Dendritic cell treated with granulocyte-macrophage colony-stimulating factor and Interleukin-4, amounts not matched to agents 40 ng/mL and 50 ng/mL, for 4 days (primary cell): ENCODE measurements at regions of chr1 and their contacts with region 1.

Region 1: GRCh38 chr1:47710329-47711071 is 272.7 kb downstream of the FOXD2 start:
- H3K4me3 Mint-ChIP-seq: no peak overlapping the region
- H3K27ac Mint-ChIP-seq: no peak overlapping the region
- H3K4me1 Mint-ChIP-seq: peaks cover 26% of the 10 kb centered on the region
- H3K27me3 Mint-ChIP-seq: peaks cover 88% of the 10 kb centered on the region

Region 2: GRCh38 chr1:47179017-47179987 is 531.2 kb before region 1 on chr1:
- intact Hi-C with region 1: loop called (anchors 10 kb)
- H3K4me3 Mint-ChIP-seq: peak overlapping the region; percentile 79
- H3K27ac Mint-ChIP-seq: peak overlapping the region; percentile 57
- H3K4me1 Mint-ChIP-seq: peaks cover 18% of the 10 kb centered on the region
- H3K27me3 Mint-ChIP-seq: peaks cover 42% of the 10 kb centered on the region

Region 3: GRCh38 chr1:47432071-47433036 is 278.1 kb before region 1 on chr1:
- intact Hi-C with region 1: loop called (anchors 1 kb)
- H3K4me3 Mint-ChIP-seq: peak overlapping the region; percentile 64
- H3K27ac Mint-ChIP-seq: peak overlapping the region; percentile 87
- H3K4me1 Mint-ChIP-seq: peaks cover 63% of the 10 kb centered on the region
- H3K27me3 Mint-ChIP-seq: peaks cover 51% of the 10 kb centered on the region

Region 4: GRCh38 chr1:47449822-47450552 is 260.5 kb before region 1 on chr1:
- intact Hi-C with region 1: loop called (anchors 5 kb)
- H3K4me3 Mint-ChIP-seq: no peak overlapping the region
- H3K27ac Mint-ChIP-seq: no peak overlapping the region
- H3K4me1 Mint-ChIP-seq: peaks cover 4% of the 10 kb centered on the region
- H3K27me3 Mint-ChIP-seq: peaks cover 59% of the 10 kb centered on the region

Region 5: GRCh38 chr1:47618830-47619229 is 91.7 kb before region 1 on chr1:
- intact Hi-C with region 1: no loop called
- H3K4me3 Mint-ChIP-seq: no peak overlapping the region
- H3K27ac Mint-ChIP-seq: no peak overlapping the region
- H3K4me1 Mint-ChIP-seq: no peaks in the 10 kb centered on the region
- H3K27me3 Mint-ChIP-seq: peaks cover 2% of the 10 kb centered on the region

Region 6: GRCh38 chr1:47637111-47637685 is 73.3 kb before region 1 on chr1:
- intact Hi-C with region 1: no loop called
- H3K4me3 Mint-ChIP-seq: no peak overlapping the region
- H3K27ac Mint-ChIP-seq: no peak overlapping the region
- H3K4me1 Mint-ChIP-seq: no peaks in the 10 kb centered on the region
- H3K27me3 Mint-ChIP-seq: peaks cover 17% of the 10 kb centered on the region

Region 7: GRCh38 chr1:47771751-47772180 is 61.3 kb after region 1 on chr1:
- intact Hi-C with region 1: no loop called
- H3K4me3 Mint-ChIP-seq: no peak overlapping the region
- H3K27ac Mint-ChIP-seq: no peak overlapping the region
- H3K4me1 Mint-ChIP-seq: no peaks in the 10 kb centered on the region
- H3K27me3 Mint-ChIP-seq: peaks cover 2% of the 10 kb centered on the region

Region 8: DNA sequence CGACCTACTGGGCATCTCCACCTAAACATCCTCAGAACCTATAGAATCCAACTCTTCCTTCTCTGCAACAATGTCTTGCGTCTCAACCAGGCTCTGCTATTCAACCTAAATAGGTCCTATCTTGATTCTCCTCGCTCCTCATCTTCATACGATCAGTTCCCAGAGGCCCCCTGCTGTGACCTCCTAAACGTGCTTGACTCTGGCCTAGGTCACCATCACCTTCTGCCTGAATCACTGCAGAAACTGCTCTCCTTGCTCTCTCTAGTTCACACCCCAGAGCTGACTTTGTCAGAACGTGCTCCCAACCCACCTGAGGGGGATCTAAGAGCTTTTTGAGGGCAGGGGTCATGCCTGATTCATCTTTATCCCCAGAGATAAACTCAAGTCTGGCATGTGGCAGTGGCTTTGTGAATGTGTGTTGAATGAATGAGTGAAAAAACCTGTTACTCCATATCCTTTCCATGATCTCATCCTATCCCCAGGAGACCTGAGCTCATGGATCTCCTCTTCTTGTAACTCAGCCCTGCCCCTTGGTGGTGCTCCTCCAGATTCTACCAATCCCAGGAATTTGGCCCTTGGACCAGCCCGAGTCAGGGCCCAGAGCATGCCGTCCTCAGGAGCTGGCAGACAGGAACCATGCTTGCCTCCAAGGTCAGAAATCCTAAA is 71.8 kb after region 1 on chr1:
- intact Hi-C with region 1: no loop called
- H3K4me3 Mint-ChIP-seq: no peak overlapping the region
- H3K27ac Mint-ChIP-seq: no peak overlapping the region
- H3K4me1 Mint-ChIP-seq: no peaks in the 10 kb centered on the region
- H3K27me3 Mint-ChIP-seq: peaks cover 5% of the 10 kb centered on the region